Heart right ventricle (tissue), 16 donors: ENCODE measurements at regions of chr1 and their contacts with region 1.

Region 1: DNA sequence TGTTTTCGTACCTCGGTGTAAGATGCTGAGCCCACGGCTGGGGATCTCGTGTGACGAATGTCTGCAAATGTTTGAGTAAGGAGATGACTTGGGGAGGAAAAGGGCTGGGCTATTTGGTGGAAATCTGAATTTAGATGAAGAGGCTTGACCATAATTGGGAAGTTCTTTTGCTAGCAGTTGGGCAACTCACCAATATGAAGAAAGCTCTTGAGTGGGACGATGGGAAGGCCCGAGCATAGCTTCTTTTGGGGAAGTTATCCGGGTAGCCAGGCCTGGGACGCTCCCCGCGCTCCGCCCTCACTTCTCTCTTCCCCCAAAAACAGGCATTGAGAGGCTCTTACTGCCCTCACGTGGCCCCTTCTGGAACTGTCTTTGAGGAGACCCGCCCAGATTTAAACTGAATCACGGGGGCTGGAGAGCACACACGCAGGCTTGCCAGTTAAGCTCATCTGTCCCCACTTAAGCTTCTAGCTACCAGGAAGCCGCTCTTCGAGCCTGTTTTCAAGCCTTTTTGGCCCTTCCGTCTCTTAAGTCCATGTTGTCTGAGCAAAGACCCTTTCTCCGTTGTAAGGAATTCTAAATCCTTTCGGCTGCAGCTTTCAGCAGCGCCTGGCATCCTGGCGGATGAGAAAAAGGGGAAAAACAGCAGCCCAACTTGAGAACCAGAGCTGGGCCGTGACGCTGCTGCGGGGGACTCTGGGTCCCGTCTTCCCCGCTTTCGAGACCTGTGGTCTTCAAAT is 93.1 kb downstream of the NID1 start:
- DNase-seq: peak; percentile 86 to 94
- ATAC-seq: peak; percentile 93 to 98 (median 96)
- H3K4me3 ChIP-seq: peak overlapping the region in 9 of 10 donors; percentile 24 to 54 (median 48)
- H3K27ac ChIP-seq: peak overlapping the region; percentile 71 to 94 (median 88)
- H3K4me1 ChIP-seq: peaks cover 0 to 23% (median 17%) of the 10 kb centered on the region in 9 donors
- H3K27me3 ChIP-seq: no peaks in the 10 kb centered on the region
- CTCF ChIP-seq: peak; percentile 74 to 92 (median 89)

Region 2: DNA sequence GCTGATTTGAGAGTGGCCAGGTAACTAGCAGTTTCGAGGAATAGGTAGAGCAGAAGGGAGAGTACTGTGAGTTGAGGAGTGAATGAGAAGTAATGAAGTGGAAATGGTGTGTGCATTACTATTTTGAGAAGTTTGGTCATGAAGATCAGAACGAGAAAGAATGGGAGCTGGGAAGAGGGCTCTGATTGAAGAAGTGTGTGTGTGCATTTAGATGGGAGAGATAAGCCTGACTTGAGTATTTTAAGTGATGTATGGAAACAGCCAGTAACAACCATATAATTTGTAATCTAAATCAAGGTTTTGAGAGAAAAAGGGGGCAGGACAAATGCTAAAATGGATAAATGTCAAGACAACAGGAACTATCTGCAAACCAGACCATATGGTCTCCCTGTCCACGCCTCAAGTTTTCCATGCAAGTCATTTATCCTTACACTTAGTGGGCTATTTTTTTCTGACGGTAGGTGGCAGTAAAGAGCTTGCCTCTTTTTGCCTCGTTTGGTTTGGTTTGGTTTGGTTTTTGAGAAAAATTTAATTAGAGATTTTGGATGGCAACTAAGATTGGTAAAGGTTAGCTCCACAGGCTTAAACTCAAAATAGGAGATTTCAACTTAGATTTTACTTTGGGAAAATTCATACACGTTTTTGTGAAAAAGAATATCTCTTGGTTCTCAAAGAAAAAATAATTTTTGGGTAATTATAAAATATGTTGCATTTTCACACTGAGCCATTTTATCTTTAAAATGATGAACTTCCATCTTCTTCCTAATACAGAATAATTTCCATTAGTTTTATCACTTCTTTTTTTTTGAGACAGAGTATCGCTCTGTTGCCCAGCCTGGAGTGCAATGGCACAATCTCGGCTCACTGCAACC is 458.0 kb before region 1 on chr1:
- intact Hi-C with region 1: loop called in 6 of 10 experiments (anchors 5 to 10 kb)
- DNase-seq: peak in 1 of 2 donors; percentile 62
- ATAC-seq: peak in 2 of 8 donors; percentile 25 to 58
- H3K4me3 ChIP-seq: no peak overlapping the region
- H3K27ac ChIP-seq: no peak overlapping the region
- H3K4me1 ChIP-seq: no peaks in the 10 kb centered on the region
- H3K27me3 ChIP-seq: no peaks in the 10 kb centered on the region
- CTCF ChIP-seq: peak; percentile 83 to 95 (median 91)

Region 3: DNA sequence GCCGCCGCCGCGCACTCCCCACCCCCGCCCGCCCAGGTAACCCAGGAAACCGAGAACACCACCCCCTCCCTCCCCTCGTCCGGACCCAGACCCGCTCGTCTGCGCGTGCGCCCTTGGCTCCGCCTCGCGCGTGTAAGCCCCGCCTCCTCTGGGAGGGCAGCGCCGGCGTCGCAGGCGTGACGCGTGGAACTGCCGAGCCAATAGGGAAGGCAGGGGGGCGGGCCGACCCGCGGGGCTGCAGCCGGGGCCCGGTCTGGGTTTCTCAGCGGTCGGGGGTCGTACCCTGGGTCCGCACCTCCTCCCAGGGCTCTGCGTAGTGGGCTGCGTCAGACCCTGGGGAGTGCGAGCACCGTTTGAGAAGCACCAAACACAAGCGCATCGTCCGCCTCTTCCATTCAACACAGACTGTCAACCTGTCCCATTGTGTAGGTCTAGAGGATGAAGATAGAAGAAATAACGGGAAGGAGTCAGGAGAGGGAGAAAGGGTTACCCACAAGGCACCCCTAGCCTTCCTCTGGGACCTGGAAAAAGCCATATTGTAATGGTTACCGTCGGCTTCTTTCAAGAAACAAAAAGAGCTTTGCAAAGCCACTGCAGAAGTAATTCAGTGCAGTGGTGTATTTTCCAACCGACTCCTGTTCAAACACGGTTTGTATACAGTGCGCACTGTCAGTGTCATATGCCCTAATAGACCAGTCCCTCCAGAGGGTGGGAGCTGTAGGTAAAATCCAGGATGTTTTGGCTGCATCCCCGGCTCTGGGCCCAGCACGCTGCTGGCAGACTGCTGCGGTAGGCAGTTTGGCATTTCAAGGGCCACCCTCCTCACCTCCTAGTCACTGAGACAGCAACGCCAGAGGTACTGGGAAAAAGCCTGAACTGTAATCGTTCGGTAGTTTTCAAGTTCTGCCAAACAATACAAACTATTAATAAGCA is 104.6 kb before region 1 on chr1:
- intact Hi-C with region 1: loop called in 7 of 10 experiments (anchors 2 to 10 kb)
- DNase-seq: peak; percentile 94 to 97
- ATAC-seq: peak; percentile 97 to 99 (median 98)
- H3K4me3 ChIP-seq: peak overlapping the region; percentile 71 to 99 (median 96)
- H3K27ac ChIP-seq: peak overlapping the region; percentile 89 to 97 (median 94)
- H3K4me1 ChIP-seq: peaks cover 0 to 48% (median 25%) of the 10 kb centered on the region in 9 donors
- H3K27me3 ChIP-seq: no peaks in the 10 kb centered on the region
- CTCF ChIP-seq: no peak

Region 4: GRCh38 chr1:235917267-235917811 is 54.4 kb before region 1 on chr1:
- intact Hi-C with region 1: loop called in 1 of 10 experiments (anchors 10 kb)
- DNase-seq: peak in 1 of 2 donors; percentile 78
- ATAC-seq: peak; percentile 88 to 96 (median 95)
- H3K4me3 ChIP-seq: no peak overlapping the region
- H3K27ac ChIP-seq: peak overlapping the region; percentile 3 to 81 (median 44)
- H3K4me1 ChIP-seq: peaks cover 2 to 50% (median 15%) of the 10 kb centered on the region in 9 donors
- H3K27me3 ChIP-seq: no peaks in the 10 kb centered on the region
- CTCF ChIP-seq: no peak